AG04450 (cell line): ENCODE measurements at regions of chr14 and their contacts with region 1.

Region 1: DNA sequence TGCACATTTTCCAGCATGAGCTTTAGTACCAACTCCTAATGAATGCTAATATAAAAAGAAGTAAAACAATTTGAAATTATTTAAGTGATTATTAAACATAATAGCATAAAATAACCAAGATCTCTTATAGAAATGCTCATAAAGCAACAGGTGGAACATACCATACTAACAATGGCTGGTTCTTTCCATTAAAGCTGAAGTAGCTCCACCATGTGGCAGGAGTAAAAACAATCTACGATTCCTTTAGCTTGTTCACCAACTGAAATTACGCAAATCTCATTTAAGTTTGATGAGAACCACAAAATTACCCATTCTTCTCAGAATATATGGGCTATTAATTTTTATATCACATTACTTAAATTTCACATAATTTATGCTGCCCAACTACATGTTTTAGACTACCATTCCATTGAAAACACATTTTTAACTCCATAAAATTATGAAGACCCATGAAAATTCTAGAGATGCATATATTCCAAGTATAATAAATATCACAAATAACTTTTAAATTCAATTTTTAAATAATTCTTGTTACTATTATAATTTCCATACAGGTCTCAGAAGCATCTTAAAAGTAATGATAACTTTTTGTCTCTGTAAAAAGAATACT is 213.6 kb downstream of the DAD1 start:
- DNase-seq: peak; percentile 39
- H3K4me3 ChIP-seq: no peak overlapping the region
- H3K27ac ChIP-seq: no peak overlapping the region
- H3K27me3 ChIP-seq: peaks cover 15% of the 10 kb centered on the region
- CTCF ChIP-seq: peak; percentile 74

Region 2: GRCh38 chr14:22163051-22163450 is 212.4 kb before region 1 on chr14:
- CTCF ChIA-PET with region 1: interaction called, 28 read pairs
- POLR2A ChIA-PET with region 1: no interaction called
- DNase-seq: no peak
- H3K4me3 ChIP-seq: no peak overlapping the region
- H3K27ac ChIP-seq: no peak overlapping the region
- H3K27me3 ChIP-seq: peaks cover 2% of the 10 kb centered on the region
- CTCF ChIP-seq: peak; percentile 60

Region 3: DNA sequence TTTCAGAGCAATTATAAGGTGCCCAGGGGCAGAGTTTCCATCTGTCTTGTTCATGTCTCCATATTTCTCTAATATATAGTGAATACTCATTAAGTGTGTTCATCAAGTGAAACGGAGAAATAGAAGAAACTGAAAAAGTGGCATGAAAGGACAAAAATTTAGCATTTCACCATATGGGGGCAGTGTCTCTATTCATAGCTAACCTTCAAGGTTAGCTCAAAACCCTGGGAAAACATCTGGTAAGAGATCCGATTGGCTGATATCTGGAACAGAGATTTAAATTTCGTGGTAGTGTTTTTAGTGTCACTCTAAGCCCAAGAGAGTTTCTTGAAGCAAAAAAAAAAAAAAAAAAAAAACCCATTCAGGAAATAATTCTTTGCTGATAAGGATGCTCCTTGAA is 153.9 kb before region 1 on chr14:
- CTCF ChIA-PET with region 1: interaction called, 12 read pairs
- POLR2A ChIA-PET with region 1: no interaction called
- DNase-seq: no peak
- H3K4me3 ChIP-seq: no peak overlapping the region
- H3K27ac ChIP-seq: no peak overlapping the region
- H3K27me3 ChIP-seq: no peaks in the 10 kb centered on the region
- CTCF ChIP-seq: peak; percentile 59

Region 4: DNA sequence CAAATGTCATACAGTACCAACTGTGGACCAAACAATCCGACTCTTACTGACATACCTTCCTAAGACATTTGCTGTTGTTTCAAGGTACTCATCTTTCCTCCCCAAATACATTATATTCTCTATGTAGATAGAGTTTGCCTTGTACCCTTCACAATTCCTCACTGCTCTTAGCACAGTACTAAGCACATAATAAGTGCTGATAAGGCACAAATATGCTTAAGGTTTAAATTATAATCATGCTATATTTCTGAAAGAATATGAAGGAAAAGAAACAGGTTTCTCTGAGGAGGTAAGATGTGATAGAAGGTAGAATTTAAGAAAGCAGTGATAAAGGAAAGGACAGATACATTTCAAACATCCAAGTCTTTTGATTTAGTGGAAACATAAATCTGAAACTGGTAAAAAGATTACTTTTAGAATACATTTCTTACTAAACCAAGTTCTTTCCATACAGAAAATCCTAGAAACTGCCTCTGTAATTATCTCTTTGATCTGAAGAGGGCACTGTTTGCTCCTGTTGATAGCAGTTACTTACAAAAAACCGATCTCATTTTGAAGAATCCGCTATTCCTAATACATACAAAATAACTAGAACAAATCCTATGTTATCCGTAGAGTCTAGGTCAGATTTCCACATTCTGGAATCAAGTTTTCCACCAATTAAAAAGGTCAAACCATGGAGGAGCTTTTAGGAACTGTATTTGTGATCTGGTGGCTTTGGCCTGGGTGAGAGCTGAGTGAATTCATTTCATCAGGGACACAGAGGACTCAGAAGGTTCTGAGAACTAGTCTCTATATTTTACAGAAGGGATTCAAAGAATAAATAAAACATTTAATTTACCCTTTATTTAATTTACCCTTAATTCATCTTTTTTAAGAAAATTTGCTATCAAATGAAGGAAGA is 98.3 kb before region 1 on chr14:
- CTCF ChIA-PET with region 1: interaction called, 11 read pairs
- POLR2A ChIA-PET with region 1: no interaction called
- DNase-seq: no peak
- H3K4me3 ChIP-seq: no peak overlapping the region
- H3K27ac ChIP-seq: no peak overlapping the region
- H3K27me3 ChIP-seq: peaks cover 5% of the 10 kb centered on the region
- CTCF ChIP-seq: peak; percentile 71

Region 5: GRCh38 chr14:22303589-22304195 is 71.7 kb before region 1 on chr14:
- CTCF ChIA-PET with region 1: interaction called, 17 read pairs
- POLR2A ChIA-PET with region 1: no interaction called
- DNase-seq: no peak
- H3K4me3 ChIP-seq: no peak overlapping the region
- H3K27ac ChIP-seq: no peak overlapping the region
- H3K27me3 ChIP-seq: no peaks in the 10 kb centered on the region
- CTCF ChIP-seq: peak; percentile 59

Region 6: DNA sequence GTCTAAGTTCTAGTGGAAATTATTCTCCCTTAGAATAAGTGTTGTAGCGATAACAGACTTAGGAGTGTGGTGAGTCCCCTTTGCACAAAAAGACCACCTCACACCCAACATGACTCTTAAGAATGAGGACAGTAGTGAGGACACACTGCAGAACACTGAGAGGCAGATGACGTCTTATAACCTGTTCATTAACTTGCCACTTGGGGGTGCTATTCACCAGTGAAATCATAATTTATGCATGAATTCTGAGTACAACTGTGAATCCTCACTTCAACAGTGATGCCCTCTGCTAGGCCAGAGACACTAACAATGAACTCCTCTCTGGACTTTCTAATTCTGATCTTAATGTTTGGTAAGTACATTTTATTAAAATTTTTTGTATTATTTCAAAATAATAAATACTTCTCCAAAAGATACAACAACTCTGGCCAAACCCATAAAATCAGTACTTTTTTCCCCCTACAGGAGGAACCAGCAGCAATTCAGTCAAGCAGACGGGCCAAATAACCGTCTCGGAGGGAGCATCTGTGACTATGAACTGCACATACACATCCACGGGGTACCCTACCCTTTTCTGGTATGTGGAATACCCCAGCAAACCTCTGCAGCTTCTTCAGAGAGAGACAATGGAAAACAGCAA is 61.1 kb before region 1 on chr14:
- CTCF ChIA-PET with region 1: interaction called, 124 read pairs
- POLR2A ChIA-PET with region 1: no interaction called
- DNase-seq: no peak
- H3K4me3 ChIP-seq: no peak overlapping the region
- H3K27ac ChIP-seq: no peak overlapping the region
- H3K27me3 ChIP-seq: no peaks in the 10 kb centered on the region
- CTCF ChIP-seq: peak; percentile 72

Region 7: DNA sequence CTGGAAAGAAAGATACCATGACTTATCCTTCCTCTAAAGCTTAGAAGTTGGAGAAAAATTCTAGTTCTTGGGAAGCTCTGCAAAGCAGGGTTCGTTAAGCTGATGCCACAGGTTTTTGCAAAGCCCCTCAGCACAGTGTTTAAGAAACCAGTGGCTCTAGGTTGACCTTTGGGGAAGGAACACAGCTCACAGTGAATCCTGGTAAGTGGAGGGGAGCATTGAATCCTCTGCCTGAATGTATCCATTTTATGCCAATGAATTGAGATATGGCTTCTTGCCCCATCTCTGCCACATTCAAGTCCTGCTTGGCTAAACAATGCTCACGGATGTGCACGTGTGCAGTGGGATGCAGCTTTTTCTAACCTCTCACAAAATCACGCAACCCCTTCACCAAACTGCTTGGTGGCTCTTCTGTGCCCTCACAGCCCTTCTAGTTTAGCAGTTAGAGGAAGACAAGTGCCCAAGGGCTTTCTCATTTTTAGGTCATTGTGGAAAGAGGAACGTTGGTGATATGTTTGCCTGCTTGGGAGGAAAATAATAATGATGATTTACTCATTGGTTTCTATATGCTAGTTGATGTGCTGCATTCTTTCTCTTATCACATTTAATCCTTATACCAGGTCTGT is 102.3 kb after region 1 on chr14:
- CTCF ChIA-PET with region 1: no interaction called
- POLR2A ChIA-PET with region 1: no interaction called
- DNase-seq: no peak
- H3K4me3 ChIP-seq: no peak overlapping the region
- H3K27ac ChIP-seq: no peak overlapping the region
- H3K27me3 ChIP-seq: peaks cover 41% of the 10 kb centered on the region
- CTCF ChIP-seq: no peak

Region 8: DNA sequence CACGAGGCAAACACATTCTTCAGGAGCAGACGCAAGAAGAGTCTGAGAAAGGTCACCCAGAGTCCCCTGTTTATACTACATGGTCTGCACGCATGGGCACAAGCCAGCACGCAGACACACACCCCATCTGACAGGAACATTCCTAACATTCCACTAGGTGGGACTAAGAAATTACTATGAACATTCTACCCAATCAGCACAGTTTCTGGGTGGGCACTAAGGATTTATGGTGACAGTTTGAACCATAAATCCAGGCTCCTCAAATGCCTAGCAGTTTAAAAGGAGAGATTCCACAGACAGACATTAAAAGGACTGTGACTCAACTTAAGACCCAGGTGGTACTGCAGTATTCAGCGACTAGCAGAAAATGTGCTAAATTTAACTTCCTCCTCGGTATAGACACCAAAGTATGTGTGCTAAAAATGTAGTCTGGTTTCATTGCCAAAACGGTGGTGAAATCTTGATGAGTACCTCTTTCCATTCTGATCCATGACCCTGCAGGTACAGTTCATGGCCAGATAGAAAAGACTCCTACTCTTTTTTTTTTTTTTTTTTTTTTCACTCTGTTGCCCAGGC is 238.9 kb after region 1 on chr14:
- CTCF ChIA-PET with region 1: no interaction called
- POLR2A ChIA-PET with region 1: no interaction called
- DNase-seq: peak; percentile 84
- H3K4me3 ChIP-seq: no peak overlapping the region
- H3K27ac ChIP-seq: peak overlapping the region; percentile 82
- H3K27me3 ChIP-seq: no peaks in the 10 kb centered on the region
- CTCF ChIP-seq: no peak